Activated B cell treated with CpG ODN at 0.5 μM for 24 hours (primary cell): ENCODE measurements at regions of chr9 and their contacts with region 1.

Region 1: DNA sequence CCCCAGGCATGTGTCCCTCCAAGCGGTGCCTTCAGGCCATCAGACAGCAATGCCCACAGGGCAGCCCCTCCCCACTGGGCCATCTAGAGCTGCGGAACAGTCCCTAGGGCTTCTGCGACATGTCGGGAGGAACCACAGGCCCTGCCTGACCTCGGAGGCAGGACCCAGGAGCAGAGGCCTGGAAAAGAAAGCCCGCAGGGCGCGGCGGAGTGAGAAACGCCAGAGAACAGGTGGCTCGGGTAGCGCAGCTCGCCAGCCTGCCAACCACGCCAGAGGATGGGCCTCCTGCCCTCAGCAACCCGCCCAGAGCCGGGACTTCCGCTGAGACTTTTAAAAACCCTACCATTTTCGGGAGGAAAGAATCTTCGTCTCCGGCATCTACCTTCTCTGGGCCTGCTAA is 715 bp downstream of the LCN8 start:
- DNase-seq: no peak
- ATAC-seq: peak; percentile 54
- H3K4me3 Mint-ChIP-seq: peak overlapping the region; percentile 68
- H3K27ac Mint-ChIP-seq: peak overlapping the region; percentile 83
- H3K4me1 Mint-ChIP-seq: peaks cover 63% of the 10 kb centered on the region
- H3K27me3 Mint-ChIP-seq: no peaks in the 10 kb centered on the region
- CTCF ChIP-seq: no peak

Region 2: GRCh38 chr9:136700959-136701667 is 56.2 kb before region 1 on chr9:
- CTCF ChIA-PET with region 1: no interaction called
- POLR2A ChIA-PET with region 1: interaction called, 10 read pairs
- intact Hi-C with region 1: no loop called
- DNase-seq: no peak
- ATAC-seq: peak; percentile 81
- H3K4me3 Mint-ChIP-seq: peak overlapping the region; percentile 78
- H3K27ac Mint-ChIP-seq: peak overlapping the region; percentile 80
- H3K4me1 Mint-ChIP-seq: peaks cover 48% of the 10 kb centered on the region
- H3K27me3 Mint-ChIP-seq: peaks cover 16% of the 10 kb centered on the region
- CTCF ChIP-seq: no peak

Region 3: GRCh38 chr9:136742591-136743391 is 14.5 kb before region 1 on chr9 and contains the start of gene LCN10:
- CTCF ChIA-PET with region 1: interaction called, 3 read pairs
- POLR2A ChIA-PET with region 1: interaction called, 37 read pairs
- intact Hi-C with region 1: no loop called
- DNase-seq: no peak
- ATAC-seq: no peak
- H3K4me3 Mint-ChIP-seq: peak within 1 kb of the TSS; percentile 86
- H3K27ac Mint-ChIP-seq: peak within 1 kb of the TSS; percentile 74
- H3K4me1 Mint-ChIP-seq: peaks cover 51% of the 10 kb centered on the region
- H3K27me3 Mint-ChIP-seq: no peaks in the 10 kb centered on the region
- CTCF ChIP-seq: no peak
- total RNA-seq, gene LCN10: 13.7 and 15.9 TPM in 2 replicates

Region 4: DNA sequence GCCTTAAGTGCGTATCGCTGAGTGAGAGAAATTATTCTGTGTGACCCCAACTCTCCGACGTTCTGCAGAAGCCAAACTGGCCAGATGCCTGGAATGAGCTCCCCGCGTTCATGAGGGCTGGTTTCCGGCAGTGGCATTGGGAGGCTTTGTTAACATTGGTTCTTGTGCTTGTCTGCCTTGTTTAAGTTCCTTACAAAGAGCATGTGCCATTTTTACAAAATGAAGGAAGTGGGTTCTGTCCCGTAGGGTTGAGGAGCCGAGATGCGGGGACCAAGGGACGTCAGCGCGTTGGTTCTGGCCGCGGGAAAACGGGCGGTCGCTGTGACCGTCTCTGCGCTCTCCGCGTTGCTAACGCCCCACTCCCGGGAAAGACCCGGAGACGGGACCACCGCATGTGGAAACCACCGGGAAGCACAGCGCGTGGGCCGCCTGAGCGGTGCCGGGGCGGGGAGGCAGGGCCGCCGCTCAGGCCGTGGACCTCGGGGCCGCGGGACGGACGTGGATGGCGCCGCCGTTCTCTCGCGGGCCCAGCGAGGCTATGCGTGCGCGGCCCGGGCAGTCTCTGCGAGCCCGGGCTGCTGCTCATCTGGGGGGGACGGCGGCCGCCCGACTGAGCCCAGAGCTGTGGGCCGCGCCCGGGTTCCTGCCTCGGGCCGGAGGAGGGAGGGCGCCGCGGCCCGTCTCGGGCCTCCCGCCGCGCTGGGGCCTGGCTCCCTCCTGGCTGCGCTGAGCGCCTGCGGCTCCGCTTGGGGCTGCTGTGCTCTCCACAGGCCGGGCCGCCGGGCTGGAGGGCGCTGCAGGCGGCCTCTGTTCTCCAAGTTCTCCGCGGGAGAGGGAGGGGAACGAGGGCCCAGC is 63.9 kb after region 1 on chr9:
- CTCF ChIA-PET with region 1: no interaction called
- POLR2A ChIA-PET with region 1: interaction called, 10 read pairs
- intact Hi-C with region 1: no loop called
- DNase-seq: no peak
- ATAC-seq: no peak
- H3K4me3 Mint-ChIP-seq: no peak overlapping the region
- H3K27ac Mint-ChIP-seq: no peak overlapping the region
- H3K4me1 Mint-ChIP-seq: peaks cover 6% of the 10 kb centered on the region
- H3K27me3 Mint-ChIP-seq: no peaks in the 10 kb centered on the region
- CTCF ChIP-seq: no peak

Region 5: GRCh38 chr9:136991993-136992818 is 234.9 kb after region 1 on chr9 and contains the start of gene PAXX:
- CTCF ChIA-PET with region 1: no interaction called
- POLR2A ChIA-PET with region 1: no interaction called
- intact Hi-C with region 1: no loop called
- DNase-seq: peak; percentile 94
- ATAC-seq: peak; percentile 91
- H3K4me3 Mint-ChIP-seq: peak within 1 kb of the TSS; percentile 86
- H3K27ac Mint-ChIP-seq: peak within 1 kb of the TSS; percentile 84
- H3K4me1 Mint-ChIP-seq: peaks cover 33% of the 10 kb centered on the region
- H3K27me3 Mint-ChIP-seq: peaks cover 6% of the 10 kb centered on the region
- CTCF ChIP-seq: no peak
- total RNA-seq, gene PAXX: 43.4 and 47.8 TPM in 2 replicates